ENCODE measurements at regions of chr1 and their contacts with region 1.

Region 1: DNA sequence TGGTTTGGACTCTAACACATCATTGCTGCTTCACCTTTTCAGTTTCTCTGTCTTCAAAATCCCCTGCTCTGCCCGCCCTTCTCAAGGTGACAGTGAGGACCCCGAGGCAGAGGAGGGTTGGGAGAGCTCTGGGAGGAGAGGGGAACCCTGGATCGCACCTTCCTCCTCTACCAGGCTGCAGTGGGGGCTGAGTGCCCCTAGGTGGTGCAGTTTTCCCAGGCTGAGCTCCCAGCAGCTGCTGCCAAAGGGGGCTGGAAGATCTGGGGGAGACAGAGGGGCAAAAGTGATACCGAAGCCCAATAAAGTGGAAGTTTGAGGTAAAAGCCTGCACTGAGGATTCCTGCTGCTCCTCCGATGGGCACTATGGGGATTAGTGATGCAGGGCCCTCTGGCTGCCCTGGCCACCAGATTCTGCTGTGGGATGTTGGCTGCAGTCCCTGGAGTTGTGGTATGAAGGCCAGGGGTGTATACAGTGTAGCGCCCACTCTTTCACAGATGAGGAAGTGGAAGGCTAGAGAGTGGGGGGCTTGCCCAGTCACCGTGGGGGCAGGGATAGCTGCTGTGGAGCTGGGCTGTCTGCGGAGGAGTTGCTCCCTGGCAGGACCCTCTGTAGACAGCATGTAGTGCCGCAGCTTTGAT is 40.7 kb upstream of the SCMH1 start:
- DNase-seq: peak; percentile 23 to 81
- H3K4me3 ChIP-seq: no peak overlapping the region
- H3K27ac ChIP-seq: no peak overlapping the region
- H3K4me1 ChIP-seq: peaks cover 8 to 15% (median 13%) of the 10 kb centered on the region in 4 experiments
- H3K27me3 ChIP-seq: no peaks in the 10 kb centered on the region; a peak in 2 of 7 replicates
- CTCF ChIP-seq: peak; percentile 78 to 94 (median 88)
- EP300 ChIP-seq: no peak
- POLR2A ChIP-seq: no peak
- RAD21 ChIP-seq: peak; percentile 83 to 84

Region 2: GRCh38 chr1:41162441-41162840 is 120.4 kb before region 1 on chr1:
- CTCF ChIA-PET with region 1: no interaction called
- POLR2A ChIA-PET with region 1: no interaction called
- DNase-seq: no peak
- H3K4me3 ChIP-seq: no peak overlapping the region
- H3K27ac ChIP-seq: no peak overlapping the region
- H3K4me1 ChIP-seq: no peaks in the 10 kb centered on the region
- H3K27me3 ChIP-seq: no peaks in the 10 kb centered on the region
- CTCF ChIP-seq: no peak
- EP300 ChIP-seq: no peak
- POLR2A ChIP-seq: no peak
- RAD21 ChIP-seq: no peak

Region 3: DNA sequence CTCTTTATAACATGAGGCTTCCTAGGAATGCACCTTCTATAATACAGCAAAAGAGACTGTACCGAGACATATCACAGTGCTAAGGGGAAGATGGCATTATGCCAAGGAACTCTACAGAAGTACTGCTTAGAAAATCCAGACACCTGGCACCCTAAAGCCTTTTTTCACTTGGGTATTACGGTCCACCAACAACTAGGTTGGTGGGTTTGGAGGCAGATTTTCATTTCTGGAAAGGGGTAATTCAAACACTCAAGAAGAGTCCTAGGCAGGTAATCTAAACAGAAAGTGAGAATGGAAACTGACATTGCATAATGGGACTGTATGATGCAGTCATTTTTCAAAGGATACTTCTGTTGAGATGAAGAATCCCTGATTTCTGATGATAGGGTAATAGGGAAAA is 60.3 kb before region 1 on chr1:
- CTCF ChIA-PET with region 1: no interaction called
- POLR2A ChIA-PET with region 1: no interaction called
- DNase-seq: no peak
- H3K4me3 ChIP-seq: no peak overlapping the region
- H3K27ac ChIP-seq: no peak overlapping the region
- H3K4me1 ChIP-seq: peaks cover 0 to 4% (median 0%) of the 10 kb centered on the region in 4 experiments; a peak in 1 of 7 replicates
- H3K27me3 ChIP-seq: no peaks in the 10 kb centered on the region
- CTCF ChIP-seq: no peak
- EP300 ChIP-seq: no peak
- POLR2A ChIP-seq: no peak
- RAD21 ChIP-seq: no peak

Region 4: DNA sequence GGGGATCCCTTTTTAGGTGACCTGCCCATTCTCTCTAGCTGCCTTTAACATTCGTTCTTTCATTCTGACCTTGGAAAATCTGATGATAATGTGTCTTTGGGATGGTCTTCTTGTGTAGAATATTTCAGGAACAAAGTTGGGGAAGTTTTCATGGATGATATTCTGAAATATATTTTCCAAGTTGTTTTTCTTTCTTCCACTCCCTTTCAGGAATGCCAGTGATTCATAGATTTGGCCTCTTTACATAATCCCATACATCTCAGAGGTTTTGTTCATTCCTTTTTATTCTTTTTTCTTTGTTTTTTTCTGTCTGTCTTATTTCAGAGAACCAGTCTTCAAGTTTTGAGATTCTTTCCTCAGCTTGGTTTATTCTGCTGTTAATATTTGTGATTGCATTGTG is 26.8 kb before region 1 on chr1:
- CTCF ChIA-PET with region 1: interaction called, 14 read pairs
- POLR2A ChIA-PET with region 1: interaction called, 3 read pairs
- DNase-seq: no peak
- H3K4me3 ChIP-seq: no peak overlapping the region
- H3K27ac ChIP-seq: no peak overlapping the region
- H3K4me1 ChIP-seq: no peaks in the 10 kb centered on the region
- H3K27me3 ChIP-seq: no peaks in the 10 kb centered on the region
- CTCF ChIP-seq: no peak
- EP300 ChIP-seq: no peak
- POLR2A ChIP-seq: no peak
- RAD21 ChIP-seq: no peak

Region 5: DNA sequence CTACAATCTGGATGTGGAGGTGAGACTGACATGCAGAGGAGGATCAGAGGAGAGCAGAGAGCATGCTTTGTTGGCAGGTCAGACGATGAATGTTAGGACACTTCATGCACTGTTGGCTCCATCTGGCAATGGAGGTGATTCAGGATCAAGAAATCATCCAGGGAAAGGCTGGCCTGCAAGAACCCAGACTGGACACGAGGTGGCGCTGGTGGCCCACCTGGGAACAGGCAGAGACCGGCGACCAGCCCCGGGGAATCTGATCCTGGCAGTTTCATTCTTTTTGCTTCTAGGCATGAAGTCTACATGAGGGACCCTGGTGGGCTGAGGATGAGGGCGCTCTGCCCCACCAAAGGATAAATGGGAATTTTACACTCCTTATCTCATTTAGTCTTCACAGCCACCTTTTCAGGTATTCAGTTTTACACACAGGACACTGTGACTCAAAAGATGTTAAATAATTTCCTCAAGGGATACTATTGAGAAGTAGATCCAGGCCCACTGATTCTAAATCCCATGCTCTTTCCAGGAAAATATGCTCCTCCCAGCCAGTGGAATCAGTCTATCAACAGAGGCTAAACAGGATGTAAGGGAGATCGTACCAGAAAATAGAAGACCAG is 14.5 kb before region 1 on chr1:
- CTCF ChIA-PET with region 1: interaction called, 44 read pairs
- POLR2A ChIA-PET with region 1: no interaction called
- DNase-seq: peak; percentile 41 to 92
- H3K4me3 ChIP-seq: no peak overlapping the region
- H3K27ac ChIP-seq: no peak overlapping the region
- H3K4me1 ChIP-seq: no peaks in the 10 kb centered on the region; a peak in 1 of 7 replicates
- H3K27me3 ChIP-seq: no peaks in the 10 kb centered on the region
- CTCF ChIP-seq: peak; percentile 96 to 99 (median 96)
- EP300 ChIP-seq: no peak
- POLR2A ChIP-seq: no peak
- RAD21 ChIP-seq: peak; percentile 99 to 100

Region 6: DNA sequence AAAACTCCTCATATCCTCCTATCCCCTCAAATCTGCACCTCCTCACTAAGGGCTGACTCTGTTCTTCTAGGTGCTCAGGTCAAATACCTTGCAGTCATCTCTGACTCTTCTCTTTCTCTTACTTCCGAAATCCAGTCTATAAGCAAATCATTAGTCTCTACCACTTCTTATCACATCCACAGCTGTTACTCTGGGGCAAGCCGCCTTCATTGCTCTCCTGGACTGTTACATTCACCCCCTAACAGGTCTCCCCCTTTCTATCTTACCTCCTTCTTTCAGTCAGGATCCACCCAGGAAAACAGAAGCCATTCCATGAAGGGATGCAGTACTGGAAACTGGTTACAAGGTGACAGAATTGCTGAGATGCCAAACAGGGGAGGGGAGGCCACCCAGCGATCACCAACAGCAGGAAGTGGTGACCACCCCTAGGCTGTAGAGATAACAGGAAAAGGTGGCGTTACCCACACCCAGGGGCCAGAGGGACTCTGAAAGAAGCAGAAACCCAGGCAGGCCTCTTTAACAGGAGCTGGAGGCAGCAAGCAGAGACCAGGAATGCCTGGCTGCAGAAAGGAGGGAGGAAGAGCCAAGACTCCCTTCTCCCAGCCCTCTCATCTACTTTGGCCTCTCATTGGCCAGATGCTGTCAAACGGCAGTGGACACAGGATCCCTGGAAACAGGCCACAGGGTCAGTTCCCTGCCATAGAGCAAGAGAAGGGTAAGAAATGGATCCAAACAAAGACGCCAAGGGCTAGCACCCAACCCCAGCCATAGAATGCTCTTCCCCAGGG is 23.0 kb after region 1 on chr1:
- CTCF ChIA-PET with region 1: interaction called, 22 read pairs
- POLR2A ChIA-PET with region 1: no interaction called
- DNase-seq: peak in 1 of 2 experiments; percentile 44
- H3K4me3 ChIP-seq: no peak overlapping the region
- H3K27ac ChIP-seq: no peak overlapping the region
- H3K4me1 ChIP-seq: no peaks in the 10 kb centered on the region; a peak in 1 of 7 replicates
- H3K27me3 ChIP-seq: no peaks in the 10 kb centered on the region
- CTCF ChIP-seq: no peak
- EP300 ChIP-seq: no peak
- POLR2A ChIP-seq: no peak
- RAD21 ChIP-seq: no peak

Region 7: DNA sequence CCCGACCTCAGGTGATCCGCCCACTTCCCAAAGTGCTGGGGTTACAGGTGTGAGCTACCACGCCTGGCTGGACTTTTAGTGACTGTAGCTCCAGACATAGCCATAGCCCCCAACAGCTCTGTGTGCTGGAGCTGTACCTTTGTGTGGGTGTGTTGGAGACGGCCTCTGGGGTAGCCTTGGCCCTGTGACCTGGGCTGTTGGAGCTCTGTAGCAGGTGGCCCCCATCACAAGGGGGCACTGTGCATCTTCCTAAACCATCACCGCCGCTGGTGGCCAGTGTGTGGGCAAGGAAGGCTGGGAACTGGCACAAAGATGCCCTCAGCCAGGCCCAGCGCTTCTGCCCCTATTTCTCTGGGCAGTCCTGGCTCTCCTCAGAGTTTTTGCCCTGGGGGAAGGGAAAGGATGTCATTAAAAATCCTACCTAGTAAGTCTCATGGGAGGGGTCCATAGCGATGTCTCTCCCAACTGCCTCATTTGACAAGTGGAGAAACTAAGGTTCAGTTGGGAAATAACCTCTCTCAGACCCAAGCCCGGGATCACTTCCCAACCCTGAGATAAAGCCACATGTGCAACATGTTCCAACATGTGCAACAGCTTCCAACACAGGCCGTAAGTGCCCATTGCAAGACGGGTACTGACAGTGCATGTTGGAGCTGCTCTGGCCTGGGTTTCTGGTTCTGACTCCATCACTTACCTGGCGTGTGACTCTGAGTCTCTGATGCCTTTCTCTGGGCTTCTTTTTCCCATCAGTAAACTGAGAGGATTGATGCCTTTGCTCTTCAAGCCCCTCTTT is 40.2 kb after region 1 on chr1:
- CTCF ChIA-PET with region 1: interaction called, 213 read pairs
- POLR2A ChIA-PET with region 1: no interaction called
- DNase-seq: peak; percentile 36 to 80
- H3K4me3 ChIP-seq: no peak overlapping the region
- H3K27ac ChIP-seq: no peak overlapping the region
- H3K4me1 ChIP-seq: peaks cover 0 to 10% (median 6%) of the 10 kb centered on the region in 4 experiments; a peak in 6 of 7 replicates
- H3K27me3 ChIP-seq: no peaks in the 10 kb centered on the region; a peak in 1 of 7 replicates
- CTCF ChIP-seq: peak; percentile 87 to 93 (median 89)
- EP300 ChIP-seq: no peak
- POLR2A ChIP-seq: no peak
- RAD21 ChIP-seq: peak; percentile 94 to 96

Region 8: DNA sequence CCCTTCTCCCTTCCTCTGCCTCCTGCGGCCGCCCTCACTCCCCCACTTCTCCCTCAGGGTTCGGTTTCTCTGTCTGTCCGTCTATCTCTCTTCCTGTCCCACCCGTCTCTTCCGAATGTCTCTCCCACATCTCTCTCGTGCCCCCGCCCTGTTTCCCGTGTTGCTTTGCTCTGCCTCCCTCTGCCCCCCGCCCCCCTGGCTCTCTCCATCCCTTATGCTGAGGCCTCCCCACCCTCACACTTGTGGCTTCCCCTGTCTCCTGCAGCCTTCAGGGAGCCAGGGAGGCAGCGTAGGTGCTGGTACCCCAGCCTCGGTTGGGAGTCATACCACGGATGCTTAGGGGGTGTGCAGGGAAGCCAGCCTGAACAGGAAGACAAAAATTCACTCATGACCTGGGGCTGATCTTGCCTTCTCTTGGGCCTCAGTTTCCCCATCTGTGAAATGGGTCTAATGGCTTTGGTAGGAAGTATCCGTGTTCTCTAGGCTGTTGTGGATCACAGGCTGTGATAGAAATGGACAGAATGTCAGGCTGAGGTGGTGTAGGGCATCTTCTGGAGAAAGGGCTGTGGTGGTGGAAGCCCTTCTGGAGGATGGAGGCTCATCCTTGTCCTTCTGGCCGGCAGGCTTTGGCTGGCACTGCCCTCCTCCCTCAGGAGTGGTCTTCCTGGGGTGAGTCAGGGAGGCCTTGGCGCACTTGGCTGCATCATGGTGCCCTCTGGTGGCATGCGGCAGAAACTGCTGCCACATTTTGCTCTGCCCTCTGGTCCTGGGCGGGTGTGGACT is 133.9 kb after region 1 on chr1:
- CTCF ChIA-PET with region 1: interaction called, 121 read pairs
- POLR2A ChIA-PET with region 1: no interaction called
- DNase-seq: peak; percentile 58 to 87
- H3K4me3 ChIP-seq: no peak overlapping the region
- H3K27ac ChIP-seq: no peak overlapping the region
- H3K4me1 ChIP-seq: peaks cover 0 to 7% (median 1%) of the 10 kb centered on the region in 4 experiments; a peak in 2 of 7 replicates
- H3K27me3 ChIP-seq: no peaks in the 10 kb centered on the region
- CTCF ChIP-seq: peak; percentile 97 to 99 (median 98)
- EP300 ChIP-seq: no peak; a peak in 1 of 3 replicates
- POLR2A ChIP-seq: no peak
- RAD21 ChIP-seq: peak; percentile 98 to 99

Region 9: DNA sequence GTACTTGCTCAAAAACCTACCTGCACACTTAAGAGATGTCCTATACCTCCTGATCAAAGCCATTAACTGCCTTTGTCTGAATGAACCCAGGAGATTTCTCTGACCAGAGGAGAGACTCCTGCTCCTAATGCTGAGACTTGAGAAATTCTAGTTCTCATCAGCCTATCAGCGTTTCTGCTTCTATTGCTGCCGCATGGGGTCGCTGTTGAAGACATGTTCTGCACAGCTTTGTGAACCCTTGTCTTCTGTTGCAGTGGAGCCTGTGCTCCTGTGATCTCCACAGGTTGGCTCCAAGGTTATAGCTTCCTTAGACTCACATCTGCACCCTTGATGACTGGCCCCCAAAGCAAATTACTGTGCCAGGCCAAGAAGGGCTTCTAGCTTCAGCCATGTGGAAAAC is 161.4 kb after region 1 on chr1:
- CTCF ChIA-PET with region 1: interaction called, 23 read pairs
- POLR2A ChIA-PET with region 1: no interaction called
- DNase-seq: no peak
- H3K4me3 ChIP-seq: no peak overlapping the region
- H3K27ac ChIP-seq: no peak overlapping the region
- H3K4me1 ChIP-seq: no peaks in the 10 kb centered on the region; a peak in 2 of 7 replicates
- H3K27me3 ChIP-seq: no peaks in the 10 kb centered on the region
- CTCF ChIP-seq: peak; percentile 26 to 63 (median 48)
- EP300 ChIP-seq: no peak
- POLR2A ChIP-seq: no peak
- RAD21 ChIP-seq: peak in 1 of 2 experiments; percentile 44; a peak in 2 of 4 replicates